SK-N-SH (cell line): ENCODE measurements at regions of chr5 and their contacts with region 1.

Region 1: GRCh38 chr5:71757590-71758543 is 38.8 kb downstream of the CARTPT start:
- DNase-seq: peak; percentile 59
- H3K4me3 ChIP-seq: no peak overlapping the region
- H3K27ac ChIP-seq: no peak overlapping the region
- H3K4me1 ChIP-seq: peaks cover 0 to 5% of the 10 kb centered on the region in 2 experiments; a peak in 1 of 4 replicates
- H3K27me3 ChIP-seq: no peaks in the 10 kb centered on the region
- CTCF ChIP-seq: peak; percentile 83
- EP300 ChIP-seq: no peak
- RAD21 ChIP-seq: peak; percentile 98

Region 2: DNA sequence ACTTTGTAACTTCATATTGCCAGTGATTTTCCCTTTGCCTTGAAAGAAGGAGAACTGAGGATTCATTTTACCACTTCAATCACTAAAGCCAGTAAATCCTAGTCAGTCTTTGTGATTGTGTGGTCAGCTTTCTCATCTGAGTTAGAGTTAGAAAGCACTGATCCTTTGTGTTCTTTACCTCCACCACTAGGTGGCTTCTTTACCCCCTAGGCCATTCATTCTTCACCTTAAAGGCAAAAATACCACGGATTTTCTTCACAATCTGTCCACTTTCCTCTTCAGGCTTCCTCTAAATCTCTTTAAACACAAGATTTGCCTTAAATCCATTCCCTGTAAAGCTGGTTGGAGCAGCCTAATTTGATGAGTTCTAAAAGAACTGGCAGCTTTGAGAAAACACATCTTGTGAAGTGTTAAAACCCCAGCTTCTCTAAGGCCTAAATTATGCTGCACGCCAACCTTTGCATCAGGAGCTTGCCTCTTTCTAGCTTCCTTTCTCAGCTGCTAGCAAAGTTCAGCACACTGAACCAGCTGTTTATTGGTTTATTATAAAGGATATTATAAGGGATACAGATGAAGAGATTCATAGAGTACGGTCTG is 282.0 kb before region 1 on chr5:
- CTCF ChIA-PET with region 1: interaction called, 82 read pairs
- POLR2A ChIA-PET with region 1: no interaction called
- DNase-seq: peak; percentile 57
- H3K4me3 ChIP-seq: no peak overlapping the region; a peak in 1 of 4 replicates
- H3K27ac ChIP-seq: peak overlapping the region in 1 of 2 experiments; percentile 23; a peak in 1 of 4 replicates
- H3K4me1 ChIP-seq: peaks cover 0 to 7% of the 10 kb centered on the region in 2 experiments; a peak in 1 of 4 replicates
- H3K27me3 ChIP-seq: no peaks in the 10 kb centered on the region
- CTCF ChIP-seq: peak; percentile 83
- EP300 ChIP-seq: no peak
- RAD21 ChIP-seq: peak; percentile 47

Region 3: GRCh38 chr5:71640408-71640807 is 117.5 kb before region 1 on chr5:
- CTCF ChIA-PET with region 1: no interaction called
- POLR2A ChIA-PET with region 1: no interaction called
- DNase-seq: no peak
- H3K4me3 ChIP-seq: no peak overlapping the region
- H3K27ac ChIP-seq: no peak overlapping the region
- H3K4me1 ChIP-seq: no peaks in the 10 kb centered on the region
- H3K27me3 ChIP-seq: no peaks in the 10 kb centered on the region
- CTCF ChIP-seq: no peak
- EP300 ChIP-seq: no peak
- RAD21 ChIP-seq: no peak

Region 4: DNA sequence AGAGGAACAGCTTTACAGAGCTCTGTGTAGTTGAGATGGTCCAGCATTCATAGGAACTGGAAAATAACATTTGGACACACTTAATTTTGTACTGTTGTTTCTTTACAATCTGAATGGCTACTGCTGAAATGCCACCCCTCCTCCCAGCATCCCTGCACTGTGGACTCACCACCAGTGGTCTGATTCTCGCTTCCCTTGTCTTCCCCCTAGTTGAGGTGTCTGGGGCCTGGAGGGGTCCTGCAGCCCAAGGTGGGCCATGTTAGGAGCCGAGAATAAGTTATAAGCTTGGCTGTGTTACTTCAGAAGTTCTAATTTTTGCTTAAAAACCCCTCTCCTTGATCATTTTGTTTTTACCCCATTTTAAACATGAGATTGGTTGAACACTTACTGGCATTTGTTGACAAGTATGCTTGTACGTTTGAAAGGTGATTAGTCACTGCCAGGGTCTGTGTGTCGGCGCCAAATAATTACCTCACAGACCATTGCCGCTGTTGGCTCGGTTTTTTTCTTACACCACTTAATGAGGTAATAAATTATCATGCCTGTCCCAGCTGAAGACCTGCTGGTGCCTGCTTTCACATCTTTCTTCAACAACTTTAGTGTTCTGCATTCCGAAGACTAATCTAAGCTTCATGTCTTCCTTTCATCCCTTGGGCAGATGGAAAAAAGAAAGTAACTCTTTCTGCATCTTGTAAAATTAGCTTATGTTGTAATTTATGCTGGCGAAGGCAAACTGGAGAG is 104.9 kb before region 1 on chr5:
- CTCF ChIA-PET with region 1: interaction called, 13 read pairs
- POLR2A ChIA-PET with region 1: no interaction called
- DNase-seq: no peak
- H3K4me3 ChIP-seq: no peak overlapping the region
- H3K27ac ChIP-seq: no peak overlapping the region
- H3K4me1 ChIP-seq: no peaks in the 10 kb centered on the region
- H3K27me3 ChIP-seq: no peaks in the 10 kb centered on the region
- CTCF ChIP-seq: no peak
- EP300 ChIP-seq: no peak
- RAD21 ChIP-seq: no peak

Region 5: DNA sequence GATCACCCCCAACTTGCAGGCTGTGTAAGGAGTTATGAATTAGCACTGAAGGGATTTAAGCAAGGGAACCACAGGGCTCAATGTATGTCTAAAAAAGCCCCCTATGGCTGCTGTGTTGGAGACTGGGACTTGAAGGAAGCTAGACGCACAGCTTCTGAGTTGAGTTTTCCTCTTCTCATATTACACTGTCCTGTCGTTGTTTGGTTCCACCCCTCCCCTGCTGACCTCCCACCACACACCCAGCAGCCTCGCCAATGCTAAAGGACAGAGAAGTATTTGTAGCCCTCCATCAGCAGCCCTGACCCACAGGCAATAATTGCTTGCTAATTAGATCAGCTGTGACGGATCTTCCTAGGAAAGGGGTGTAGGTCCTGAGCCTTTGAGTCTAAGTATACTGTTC is 53.9 kb before region 1 on chr5:
- CTCF ChIA-PET with region 1: interaction called, 10 read pairs
- POLR2A ChIA-PET with region 1: no interaction called
- DNase-seq: no peak
- H3K4me3 ChIP-seq: no peak overlapping the region
- H3K27ac ChIP-seq: no peak overlapping the region
- H3K4me1 ChIP-seq: peaks cover 0 to 11% of the 10 kb centered on the region in 2 experiments; a peak in 1 of 4 replicates
- H3K27me3 ChIP-seq: peaks cover 5% of the 10 kb centered on the region; the same call in 1 of the 2 replicates
- CTCF ChIP-seq: no peak
- EP300 ChIP-seq: no peak
- RAD21 ChIP-seq: no peak

Region 6: GRCh38 chr5:71719063-71719964 is 38.6 kb before region 1 on chr5 and contains the start of gene CARTPT:
- CTCF ChIA-PET with region 1: interaction called, 19 read pairs
- POLR2A ChIA-PET with region 1: no interaction called
- DNase-seq: peak; percentile 64
- H3K4me3 ChIP-seq: peak within 1 kb of the TSS in 1 of 2 experiments; percentile 23; a peak in 2 of 4 replicates
- H3K27ac ChIP-seq: no peak within 1 kb of the TSS
- H3K4me1 ChIP-seq: peaks cover 0 to 14% of the 10 kb centered on the region in 2 experiments; a peak in 1 of 4 replicates
- H3K27me3 ChIP-seq: peaks cover 22% of the 10 kb centered on the region
- CTCF ChIP-seq: no peak
- EP300 ChIP-seq: no peak
- RAD21 ChIP-seq: no peak
- polyA plus RNA-seq, gene CARTPT: not detected in 2 replicates

Region 7: DNA sequence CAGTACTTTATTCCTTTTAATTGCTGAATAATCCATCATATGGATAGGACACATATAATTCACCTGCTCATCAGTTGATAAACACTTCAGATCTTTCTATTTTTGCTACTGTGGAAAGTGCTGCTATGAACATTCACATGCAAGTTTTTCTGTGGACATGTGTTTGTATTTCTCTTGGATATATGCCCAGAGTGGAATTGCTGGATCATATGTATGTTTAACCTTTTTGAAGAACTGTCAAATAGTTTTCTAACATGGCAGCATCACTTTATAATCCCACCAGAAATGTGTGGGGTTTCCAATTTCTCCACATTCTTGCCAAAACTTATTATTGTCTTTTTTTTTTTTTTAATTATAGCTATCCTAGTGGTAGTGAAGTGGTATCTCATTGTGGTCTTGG is 23.7 kb before region 1 on chr5:
- CTCF ChIA-PET with region 1: interaction called, 12 read pairs
- POLR2A ChIA-PET with region 1: no interaction called
- DNase-seq: no peak
- H3K4me3 ChIP-seq: no peak overlapping the region
- H3K27ac ChIP-seq: no peak overlapping the region
- H3K4me1 ChIP-seq: no peaks in the 10 kb centered on the region
- H3K27me3 ChIP-seq: no peaks in the 10 kb centered on the region; the same call in 1 of the 2 replicates
- CTCF ChIP-seq: no peak
- EP300 ChIP-seq: no peak
- RAD21 ChIP-seq: no peak

Region 8: DNA sequence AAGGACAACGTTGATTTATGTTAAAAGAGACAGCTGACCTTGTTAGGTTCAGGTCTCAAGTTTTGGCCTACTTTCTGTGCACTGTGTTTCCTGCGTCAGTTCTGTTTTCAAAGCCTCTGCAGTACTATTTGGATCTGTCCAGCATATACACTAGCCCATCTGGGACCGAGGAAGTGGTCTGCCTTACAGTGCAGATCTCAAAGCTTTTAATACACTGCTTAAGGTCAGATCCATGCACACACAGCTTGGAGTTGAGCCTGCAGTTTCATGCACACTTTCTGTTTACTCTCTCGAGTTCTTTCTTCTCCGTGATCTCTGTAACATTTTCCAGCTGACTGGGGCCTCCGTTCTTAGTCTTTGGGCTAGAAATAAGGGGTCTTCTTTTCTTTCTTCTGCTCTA is 14.7 kb before region 1 on chr5:
- CTCF ChIA-PET with region 1: interaction called, 47 read pairs
- POLR2A ChIA-PET with region 1: no interaction called
- DNase-seq: no peak
- H3K4me3 ChIP-seq: no peak overlapping the region
- H3K27ac ChIP-seq: no peak overlapping the region
- H3K4me1 ChIP-seq: peaks cover 0 to 2% of the 10 kb centered on the region in 2 experiments; a peak in 1 of 4 replicates
- H3K27me3 ChIP-seq: no peaks in the 10 kb centered on the region
- CTCF ChIP-seq: no peak
- EP300 ChIP-seq: no peak
- RAD21 ChIP-seq: no peak

Region 9: GRCh38 chr5:71783891-71784290 is 26.0 kb after region 1 on chr5:
- CTCF ChIA-PET with region 1: no interaction called
- POLR2A ChIA-PET with region 1: no interaction called
- DNase-seq: no peak
- H3K4me3 ChIP-seq: no peak overlapping the region
- H3K27ac ChIP-seq: no peak overlapping the region
- H3K4me1 ChIP-seq: peaks cover 4 to 9% of the 10 kb centered on the region in 2 experiments; a peak in 2 of 4 replicates
- H3K27me3 ChIP-seq: no peaks in the 10 kb centered on the region
- CTCF ChIP-seq: no peak
- EP300 ChIP-seq: no peak
- RAD21 ChIP-seq: no peak